Heart left ventricle (tissue), 16 donors: ENCODE measurements at regions of chr10 and their contacts with region 1.

Region 1: GRCh38 chr10:103481974-103482531 is 3.0 kb upstream of the CALHM3 start:
- DNase-seq: peak in 1 of 5 donors; percentile 28
- ATAC-seq: peak in 3 of 4 donors; percentile 53 to 59 (median 58)
- H3K4me3 ChIP-seq: no peak overlapping the region
- H3K27ac ChIP-seq: no peak overlapping the region
- H3K4me1 ChIP-seq: peaks cover 0 to 10% (median 0%) of the 10 kb centered on the region in 12 donors
- H3K27me3 ChIP-seq: no peaks in the 10 kb centered on the region
- CTCF ChIP-seq: peak; percentile 44 to 78 (median 66)
- POLR2A ChIP-seq: no peak

Region 2: GRCh38 chr10:103416436-103417147 is 65.5 kb before region 1 on chr10:
- intact Hi-C with region 1: loop called (anchors 1 to 2 kb)
- DNase-seq: peak in 3 of 5 donors; percentile 58 to 65 (median 61)
- ATAC-seq: peak in 3 of 4 donors; percentile 18 to 57 (median 28)
- H3K4me3 ChIP-seq: no peak overlapping the region
- H3K27ac ChIP-seq: no peak overlapping the region
- H3K4me1 ChIP-seq: no peaks in the 10 kb centered on the region
- H3K27me3 ChIP-seq: no peaks in the 10 kb centered on the region
- CTCF ChIP-seq: peak; percentile 56 to 86 (median 72)
- POLR2A ChIP-seq: no peak